WTC11 (cell line): ENCODE measurements at regions of chr6 and their contacts with region 1.

Region 1: DNA sequence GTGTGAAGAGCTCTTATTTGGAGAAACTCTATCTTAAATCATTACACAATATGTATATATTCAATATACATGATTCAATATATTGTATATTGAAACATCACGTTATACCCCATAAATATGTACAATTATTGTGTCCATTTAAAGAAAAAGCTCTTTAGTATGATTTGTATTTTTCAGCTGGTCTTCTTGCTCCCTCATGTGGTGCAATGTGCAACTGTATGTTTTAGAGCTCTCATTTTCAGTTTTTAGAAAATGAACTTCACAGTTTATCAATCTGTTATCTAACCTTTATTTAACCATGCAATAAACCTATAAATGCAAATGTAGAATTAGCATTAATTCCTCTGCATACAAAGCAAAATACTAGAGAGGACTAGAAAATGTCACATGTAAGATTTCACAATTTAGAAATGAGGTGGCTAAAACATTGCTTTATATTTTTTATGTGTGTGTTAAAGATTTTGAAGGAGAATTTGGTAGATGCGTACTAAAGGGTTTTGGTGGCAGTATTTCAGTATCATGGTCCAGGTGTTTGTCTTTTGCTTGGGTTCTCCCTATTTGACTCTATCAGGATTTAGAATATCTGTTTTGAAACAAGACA is 167.1 kb downstream of the PHF3 start:
- DNase-seq: no peak
- ATAC-seq: no peak
- H3K4me3 Mint-ChIP-seq: no peak overlapping the region
- H3K27ac Mint-ChIP-seq: no peak overlapping the region
- H3K4me1 Mint-ChIP-seq: peaks cover 13% of the 10 kb centered on the region
- H3K27me3 Mint-ChIP-seq: no peaks in the 10 kb centered on the region; the same call in 1 of the 2 replicates
- CTCF ChIP-seq: no peak

Region 2: DNA sequence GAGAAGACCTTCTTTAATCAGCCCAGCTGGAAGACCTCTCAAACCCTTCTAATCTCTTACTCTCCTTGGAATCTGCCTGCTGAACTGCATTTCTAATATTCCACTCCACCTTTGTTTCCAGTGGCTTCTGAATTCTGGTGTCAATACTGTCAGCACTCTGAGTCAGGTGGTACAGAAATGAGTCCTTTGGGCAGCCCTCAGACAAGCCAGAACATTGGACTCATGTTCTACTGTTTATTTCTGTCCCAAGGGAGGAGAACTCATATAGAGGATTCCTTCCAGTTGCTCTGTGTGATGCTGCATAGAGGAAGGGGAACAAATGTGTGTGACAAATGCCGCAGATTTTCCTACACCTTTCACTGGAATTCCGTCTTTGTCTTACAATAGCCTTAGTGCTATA is 52.3 kb before region 1 on chr6:
- CTCF ChIA-PET with region 1: no interaction called
- POLR2A ChIA-PET with region 1: no interaction called
- DNase-seq: no peak
- ATAC-seq: no peak
- H3K4me3 Mint-ChIP-seq: no peak overlapping the region
- H3K27ac Mint-ChIP-seq: no peak overlapping the region
- H3K4me1 Mint-ChIP-seq: peaks cover 8% of the 10 kb centered on the region
- H3K27me3 Mint-ChIP-seq: peaks cover 4% of the 10 kb centered on the region; the same call in 1 of the 2 replicates
- CTCF ChIP-seq: no peak

Region 3: DNA sequence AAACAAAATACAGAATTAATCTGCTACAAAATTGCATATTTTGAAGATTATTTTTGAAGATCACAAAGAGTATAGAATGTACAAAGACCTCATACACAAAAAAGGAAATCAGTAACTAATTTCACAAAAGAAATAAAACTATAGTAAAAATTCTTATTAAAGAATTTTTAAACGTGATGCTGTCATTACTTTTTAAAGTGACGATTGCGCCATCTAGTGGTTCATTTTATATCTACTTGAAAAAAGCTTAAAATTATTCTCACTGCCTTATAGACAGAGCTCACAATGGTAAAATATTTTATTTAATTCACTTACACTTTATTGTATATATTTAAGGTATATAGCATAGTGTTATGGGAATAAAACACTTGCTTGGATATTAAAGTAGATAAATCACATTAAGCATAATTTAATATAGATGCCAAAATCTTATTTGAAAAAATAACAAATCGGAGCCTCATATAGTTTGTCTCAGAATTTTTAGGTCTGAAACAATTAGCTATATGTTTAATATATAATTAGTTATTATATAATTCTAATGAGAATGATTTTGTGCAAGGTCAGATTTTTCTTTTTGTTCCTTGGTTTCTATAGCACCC is 38.3 kb before region 1 on chr6:
- CTCF ChIA-PET with region 1: interaction called, 16 read pairs
- POLR2A ChIA-PET with region 1: no interaction called
- DNase-seq: no peak
- ATAC-seq: no peak
- H3K4me3 Mint-ChIP-seq: no peak overlapping the region
- H3K27ac Mint-ChIP-seq: no peak overlapping the region
- H3K4me1 Mint-ChIP-seq: peaks cover 3% of the 10 kb centered on the region
- H3K27me3 Mint-ChIP-seq: peaks cover 9% of the 10 kb centered on the region; the same call in 1 of the 2 replicates
- CTCF ChIP-seq: peak; percentile 43

Region 4: DNA sequence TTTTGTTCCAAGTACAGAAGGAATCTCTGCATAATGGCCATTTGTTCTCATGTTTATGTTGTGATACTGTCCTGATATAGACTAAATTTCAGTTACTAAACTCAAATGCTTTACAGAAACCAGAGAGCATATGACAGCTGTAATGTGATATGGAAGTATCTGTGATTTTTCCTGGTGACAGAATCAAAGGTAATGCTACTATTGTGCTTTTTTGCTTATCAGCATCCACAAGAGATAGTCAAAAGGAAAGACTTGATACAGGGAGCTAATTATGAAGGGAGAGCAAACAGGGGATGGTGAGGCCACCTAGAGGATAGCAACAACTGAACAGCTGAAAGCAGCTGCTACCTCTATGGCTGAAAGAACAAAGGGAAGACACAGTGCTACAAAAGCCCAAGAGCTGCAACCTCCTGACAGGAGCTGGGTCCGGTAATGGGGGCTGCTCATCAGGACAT is 14.3 kb after region 1 on chr6:
- CTCF ChIA-PET with region 1: interaction called, 12 read pairs
- POLR2A ChIA-PET with region 1: no interaction called
- DNase-seq: no peak
- ATAC-seq: peak; percentile 98
- H3K4me3 Mint-ChIP-seq: no peak overlapping the region
- H3K27ac Mint-ChIP-seq: no peak overlapping the region
- H3K4me1 Mint-ChIP-seq: no peaks in the 10 kb centered on the region
- H3K27me3 Mint-ChIP-seq: no peaks in the 10 kb centered on the region
- CTCF ChIP-seq: no peak